ENCODE measurements at regions of chr12 and their contacts with region 1.

Region 1: DNA sequence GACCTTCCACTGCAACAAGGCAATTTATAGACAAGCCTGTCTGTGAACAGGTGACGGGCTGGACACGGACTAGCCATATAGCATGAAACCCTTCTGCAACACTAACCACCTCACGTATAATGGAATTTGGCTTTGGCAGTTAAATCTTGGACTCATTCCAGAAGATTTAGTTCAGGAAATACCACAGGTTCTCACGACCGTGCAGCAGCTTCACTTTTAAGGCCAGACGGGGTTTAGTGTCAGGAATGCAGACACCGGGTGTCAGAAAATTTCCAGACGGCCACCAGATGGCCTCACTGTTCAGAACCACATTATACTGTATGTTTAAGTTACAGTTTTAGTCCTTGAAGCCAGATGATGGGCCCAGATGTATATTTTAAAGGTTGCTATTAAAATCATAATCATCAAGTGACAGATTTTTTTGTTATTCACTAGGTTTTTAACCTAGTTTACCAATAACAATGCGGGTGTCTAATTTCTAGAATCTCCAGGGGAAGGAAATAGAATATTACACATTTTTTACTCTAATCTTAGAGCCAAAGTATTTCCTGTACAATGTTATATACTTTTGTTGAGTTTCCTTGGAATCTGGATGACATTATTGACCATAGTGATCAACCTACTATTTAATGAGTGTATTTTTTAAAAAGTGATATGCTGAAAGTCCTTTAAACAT is 90.5 kb upstream of the TMPO start:
- DNase-seq: peak; percentile 63
- H3K4me3 ChIP-seq: no peak overlapping the region
- H3K27ac ChIP-seq: no peak overlapping the region
- H3K4me1 ChIP-seq: no peaks in the 10 kb centered on the region
- CTCF ChIP-seq: peak; percentile 91

Region 2: DNA sequence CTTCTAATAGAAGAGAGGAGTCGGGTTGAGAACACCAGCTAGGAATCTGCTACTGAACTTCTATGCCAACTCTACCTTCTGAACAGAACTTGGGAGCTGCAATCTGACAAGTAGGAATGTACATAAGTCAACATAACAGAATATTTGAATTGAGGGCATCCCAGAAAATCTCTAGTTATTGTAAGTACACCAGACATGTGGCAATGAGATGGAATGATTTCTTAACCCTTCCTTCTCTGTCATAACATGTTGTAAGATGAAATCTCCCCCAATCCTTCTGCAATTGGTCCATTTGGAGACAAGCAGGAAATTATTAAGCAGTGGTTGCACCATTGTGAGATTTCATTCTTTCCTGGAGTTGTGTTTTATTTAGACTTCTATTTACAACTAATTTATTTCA is 21.8 kb after region 1 on chr12:
- CTCF ChIA-PET with region 1: no interaction called
- POLR2A ChIA-PET with region 1: no interaction called
- intact Hi-C with region 1: no loop called
- DNase-seq: no peak
- H3K4me3 ChIP-seq: no peak overlapping the region
- H3K27ac ChIP-seq: no peak overlapping the region
- H3K4me1 ChIP-seq: no peaks in the 10 kb centered on the region
- CTCF ChIP-seq: no peak

Region 3: DNA sequence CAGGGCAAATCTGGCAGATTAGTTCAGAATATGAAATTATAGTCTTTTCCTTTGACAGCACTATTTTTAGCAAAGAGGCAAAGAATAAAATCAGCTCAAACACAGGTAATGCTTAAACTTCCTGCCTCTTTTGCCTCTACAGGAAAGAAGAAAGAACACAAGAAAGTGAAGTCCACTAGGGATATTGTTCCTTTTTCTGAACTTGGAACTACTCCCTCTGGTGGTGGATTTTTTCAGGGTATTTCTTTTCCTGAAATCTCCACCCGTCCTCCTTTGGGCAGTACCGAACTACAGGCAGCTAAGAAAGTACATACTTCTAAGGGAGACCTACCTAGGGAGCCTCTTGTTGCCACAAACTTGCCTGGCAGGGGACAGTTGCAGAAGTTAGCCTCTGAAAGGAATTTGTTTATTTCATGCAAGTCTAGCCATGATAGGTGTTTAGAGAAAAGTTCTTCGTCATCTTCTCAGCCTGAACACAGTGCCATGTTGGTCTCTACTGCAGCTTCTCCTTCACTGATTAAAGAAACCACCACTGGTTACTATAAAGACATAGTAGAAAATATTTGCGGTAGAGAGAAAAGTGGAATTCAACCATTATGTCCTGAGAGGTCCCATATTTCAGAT is 107.9 kb after region 1 on chr12:
- CTCF ChIA-PET with region 1: no interaction called
- POLR2A ChIA-PET with region 1: no interaction called
- intact Hi-C with region 1: loop called (anchors 5 kb)
- DNase-seq: peak; percentile 63
- H3K4me3 ChIP-seq: no peak overlapping the region
- H3K27ac ChIP-seq: no peak overlapping the region
- H3K4me1 ChIP-seq: no peaks in the 10 kb centered on the region
- CTCF ChIP-seq: peak; percentile 86